H1 (cell line): ENCODE measurements at regions of chr1 and their contacts with region 1.

Region 1: DNA sequence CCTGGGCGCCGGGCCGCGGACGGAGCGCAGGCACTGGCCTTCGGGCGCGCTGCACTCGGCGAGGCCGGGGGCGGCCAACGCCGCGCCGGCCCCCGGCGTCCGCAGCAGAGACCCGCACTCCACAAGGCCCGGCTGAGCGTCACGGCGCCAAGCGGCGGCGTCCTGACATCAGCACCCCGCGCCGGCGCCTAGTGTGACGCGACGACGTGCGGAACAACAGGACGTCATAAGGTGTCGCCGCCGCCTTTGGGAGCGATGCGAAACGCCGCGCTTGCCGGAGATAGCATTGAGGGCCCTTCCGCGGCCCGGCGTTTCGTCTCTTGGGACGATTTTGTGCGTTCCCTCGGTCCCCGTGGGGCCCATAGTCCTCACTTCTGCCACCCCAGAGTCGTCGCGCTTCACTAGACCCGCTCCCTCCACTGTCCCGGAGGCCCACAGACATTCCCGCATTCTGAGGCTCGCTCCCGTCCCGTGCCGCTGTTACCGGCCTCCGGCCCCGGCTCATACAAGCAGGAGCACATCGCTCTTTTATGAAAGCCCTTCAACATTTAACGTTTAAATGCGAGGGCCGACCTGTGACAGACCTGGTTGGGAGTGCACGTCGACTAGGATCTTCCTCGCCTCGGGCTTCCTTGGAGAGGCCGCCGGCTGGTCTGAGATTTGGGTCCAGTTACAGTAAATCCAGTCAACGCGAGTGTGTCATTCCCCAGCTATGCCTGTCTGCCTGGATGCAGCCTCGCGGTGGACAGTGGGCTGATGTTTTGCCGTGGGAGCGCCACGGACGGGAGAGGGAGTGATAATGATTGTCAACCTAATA is at the start of gene SSU72:
- DNase-seq: peak; percentile 70 to 98
- H3K4me3 ChIP-seq: peak within 1 kb of the TSS; percentile 84 to 99 (median 94)
- H3K27ac ChIP-seq: peak within 1 kb of the TSS; percentile 99
- H3K4me1 ChIP-seq: peaks cover 0 to 2% (median 0%) of the 10 kb centered on the region in 4 experiments; a peak in 2 of 7 replicates
- H3K27me3 ChIP-seq: no peaks in the 10 kb centered on the region
- CTCF ChIP-seq: peak in 1 of 3 experiments; percentile 3; a peak in 1 of 4 replicates
- EP300 ChIP-seq: 0 out of 3 replicates have a peak, but pooled peaks of 1 of the 2 experiments have one; percentile 39
- POLR2A ChIP-seq: peak; percentile 93 to 97
- RAD21 ChIP-seq: no peak
- total RNA-seq, gene SSU72: 165 and 170 TPM in 2 replicates

Region 2: GRCh38 chr1:1307908-1308755 is 266.8 kb before region 1 on chr1 and contains the starts of genes ACAP3 and PUSL1:
- CTCF ChIA-PET with region 1: no interaction called
- POLR2A ChIA-PET with region 1: no interaction called
- DNase-seq: peak in 1 of 2 experiments; percentile 87
- H3K4me3 ChIP-seq: peak within 1 kb of the TSS; percentile 77 to 98 (median 87)
- H3K27ac ChIP-seq: no peak within 1 kb of the TSS; the same call in 1 of the 2 replicates
- H3K4me1 ChIP-seq: peaks cover 0 to 40% (median 31%) of the 10 kb centered on the region in 4 experiments; a peak in 6 of 7 replicates
- H3K27me3 ChIP-seq: peaks cover 0 to 4% (median 1%) of the 10 kb centered on the region in 4 experiments; a peak in 1 of 7 replicates
- CTCF ChIP-seq: no peak
- EP300 ChIP-seq: no peak
- POLR2A ChIP-seq: no peak
- RAD21 ChIP-seq: no peak
- total RNA-seq, gene ACAP3: 26.5 and 28.3 TPM in 2 replicates
- total RNA-seq, gene PUSL1: 38.8 and 40.1 TPM in 2 replicates

Region 3: GRCh38 chr1:1511533-1512285 is 63.2 kb before region 1 on chr1 and contains the start of gene ATAD3A:
- CTCF ChIA-PET with region 1: no interaction called
- POLR2A ChIA-PET with region 1: no interaction called
- DNase-seq: peak; percentile 85 to 97
- H3K4me3 ChIP-seq: peak within 1 kb of the TSS; percentile 61 to 82 (median 76)
- H3K27ac ChIP-seq: peak within 1 kb of the TSS; percentile 85
- H3K4me1 ChIP-seq: no peaks in the 10 kb centered on the region; a peak in 1 of 7 replicates
- H3K27me3 ChIP-seq: no peaks in the 10 kb centered on the region
- CTCF ChIP-seq: no peak
- EP300 ChIP-seq: no peak
- POLR2A ChIP-seq: peak in 1 of 2 experiments; percentile 86; a peak in 2 of 3 replicates
- RAD21 ChIP-seq: no peak
- total RNA-seq, gene ATAD3A: 63.7 and 64.7 TPM in 2 replicates

Region 4: DNA sequence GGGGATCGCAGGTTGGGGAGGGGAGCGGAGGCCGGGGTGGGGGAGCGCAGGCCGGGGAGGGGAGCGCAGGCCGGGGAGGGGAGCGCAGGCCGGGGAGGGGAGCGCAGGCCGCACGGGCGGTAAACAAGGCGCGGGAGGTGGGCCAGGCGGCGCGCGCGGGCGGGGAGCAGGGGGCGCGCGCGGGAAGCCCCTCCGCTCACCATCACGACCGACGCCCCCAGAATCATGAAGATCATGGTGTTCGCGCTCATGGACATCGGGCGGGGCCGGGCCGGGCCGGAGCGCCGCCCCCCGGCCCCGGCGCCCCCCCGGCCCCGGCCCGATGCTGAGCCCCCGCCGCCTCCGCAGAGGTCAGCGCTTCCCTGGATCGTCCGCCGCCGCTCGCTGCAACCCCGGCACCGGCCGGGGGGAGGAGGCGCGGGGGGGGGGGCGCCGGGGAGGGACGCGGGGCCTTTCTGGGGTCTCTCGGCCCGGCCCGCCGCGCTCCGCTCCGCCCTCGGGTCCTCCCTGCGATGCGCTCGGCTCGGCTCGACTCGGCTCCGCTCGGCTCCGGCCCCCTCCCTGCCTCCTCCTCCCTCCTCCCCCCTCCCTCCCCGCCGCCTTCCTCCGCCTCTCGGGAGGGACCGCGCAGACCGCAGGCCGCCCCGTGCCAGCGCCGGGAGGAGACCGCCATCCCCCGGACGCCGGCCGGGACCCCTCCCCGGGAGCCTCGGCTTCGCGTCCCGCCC is 34.7 kb before region 1 on chr1 and contains the start of gene TMEM240:
- CTCF ChIA-PET with region 1: no interaction called
- POLR2A ChIA-PET with region 1: interaction called, 367 read pairs
- DNase-seq: peak; percentile 39 to 90
- H3K4me3 ChIP-seq: peak within 1 kb of the TSS; percentile 50 to 75 (median 67)
- H3K27ac ChIP-seq: peak within 1 kb of the TSS; percentile 26; the same call in 1 of the 2 replicates
- H3K4me1 ChIP-seq: peaks cover 0 to 9% (median 3%) of the 10 kb centered on the region in 4 experiments; a peak in 3 of 7 replicates
- H3K27me3 ChIP-seq: no peaks in the 10 kb centered on the region
- CTCF ChIP-seq: no peak
- EP300 ChIP-seq: no peak
- POLR2A ChIP-seq: no peak
- RAD21 ChIP-seq: no peak
- total RNA-seq, gene TMEM240: 3.6 and 6.6 TPM in 2 replicates

Region 5: DNA sequence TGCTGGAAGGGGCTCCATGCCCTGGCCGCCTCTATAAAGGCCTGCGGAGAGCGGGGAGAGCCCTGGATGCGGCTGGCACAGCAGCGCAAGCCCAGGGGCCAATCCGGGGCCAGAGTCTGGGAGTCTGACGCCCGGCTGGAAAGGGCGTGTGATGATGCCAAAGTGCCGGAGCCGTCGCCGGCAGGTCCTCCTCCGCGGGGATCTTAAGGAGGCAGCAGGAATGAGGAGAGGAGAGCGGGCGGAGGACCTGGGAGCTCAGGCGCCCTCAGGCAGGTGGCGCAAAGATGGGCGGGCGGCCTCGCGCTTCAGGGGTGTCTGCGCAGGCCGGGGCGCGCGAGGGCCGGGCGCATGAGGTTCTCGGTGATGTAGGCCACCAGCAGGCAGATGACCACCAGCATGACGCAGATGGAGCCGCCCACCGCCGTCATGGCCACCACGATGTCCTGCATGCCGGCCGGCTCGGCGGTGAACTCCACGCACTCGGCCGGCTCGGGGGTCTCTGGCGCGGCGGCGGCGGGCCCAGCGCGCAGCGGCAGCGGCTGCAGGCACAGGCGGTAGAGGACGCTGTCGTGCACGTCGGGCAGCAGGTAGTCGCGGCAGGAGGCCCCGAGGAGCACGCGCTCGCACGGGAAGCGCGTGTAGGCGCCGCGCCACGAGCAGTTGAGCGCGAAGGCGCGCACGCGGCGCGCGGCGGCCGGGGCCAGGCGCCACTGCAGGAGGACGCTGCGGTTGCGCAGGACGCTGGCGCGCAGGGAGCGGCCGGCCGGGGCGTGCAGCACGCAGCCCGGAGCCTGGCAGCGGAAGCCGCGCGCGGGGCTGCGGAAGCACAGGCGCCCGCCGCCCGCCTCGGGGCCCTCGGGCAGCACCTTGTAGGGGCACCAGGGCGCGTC is 24.3 kb after region 1 on chr1:
- CTCF ChIA-PET with region 1: interaction called, 15 read pairs
- POLR2A ChIA-PET with region 1: interaction called, 10 read pairs
- DNase-seq: peak in 1 of 2 experiments; percentile 82
- H3K4me3 ChIP-seq: peak overlapping the region; percentile 28 to 63 (median 36)
- H3K27ac ChIP-seq: no peak overlapping the region
- H3K4me1 ChIP-seq: peaks cover 0 to 24% (median 18%) of the 10 kb centered on the region in 4 experiments; a peak in 6 of 7 replicates
- H3K27me3 ChIP-seq: peaks cover 13 to 41% (median 34%) of the 10 kb centered on the region in 4 experiments
- CTCF ChIP-seq: peak in 2 of 3 experiments; percentile 55 to 65; a peak in 3 of 4 replicates
- EP300 ChIP-seq: no peak
- POLR2A ChIP-seq: no peak
- RAD21 ChIP-seq: no peak; a peak in 2 of 4 replicates